ENCODE measurements at regions of chr14 and their contacts with region 1.

Region 1: DNA sequence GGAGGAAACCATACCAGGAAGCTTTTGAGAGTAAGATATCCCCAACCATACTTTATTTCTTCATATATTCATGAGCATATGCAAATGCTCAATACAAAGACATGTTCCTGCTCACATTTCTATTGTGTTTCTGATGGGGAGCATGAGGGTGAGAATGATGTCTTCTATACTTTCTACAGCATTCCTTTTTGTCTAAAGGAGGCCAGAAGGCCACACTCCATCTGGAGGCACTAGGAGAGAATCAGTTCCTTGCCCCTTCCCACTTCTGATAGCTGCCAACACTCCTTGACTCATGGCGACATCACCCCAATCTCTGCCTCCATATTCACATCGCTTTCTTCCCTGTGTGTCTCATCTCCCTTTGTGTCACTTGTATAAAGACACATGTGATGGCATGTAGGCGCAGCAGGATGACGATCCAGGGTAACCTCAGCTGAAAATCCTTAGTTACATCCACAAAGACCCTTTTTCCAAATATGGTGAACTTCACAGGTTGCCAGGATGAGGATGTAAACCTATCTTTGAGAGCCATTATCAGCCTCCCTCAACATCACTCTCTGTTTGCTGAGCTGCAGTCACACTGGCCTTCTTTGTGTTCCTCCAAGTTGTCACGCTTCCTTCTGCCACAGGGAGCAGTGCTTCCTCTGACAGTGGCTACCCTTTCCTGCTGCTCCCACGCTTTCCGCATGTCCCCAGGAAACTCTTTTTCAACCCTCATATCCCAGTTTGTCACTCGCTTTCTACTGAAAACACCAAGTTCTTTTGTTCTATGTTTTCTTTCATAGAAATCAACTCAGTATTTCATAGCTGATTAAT is 96.9 kb downstream of the STXBP6 start:
- DNase-seq: no peak
- ATAC-seq: peak; percentile 32
- H3K4me3 ChIP-seq: no peak overlapping the region
- H3K27ac ChIP-seq: no peak overlapping the region
- H3K4me1 ChIP-seq: peaks cover 6% of the 10 kb centered on the region
- H3K27me3 ChIP-seq: no peaks in the 10 kb centered on the region
- CTCF ChIP-seq: peak in 2 of 3 experiments; percentile 10 to 30; a peak in 2 of 6 replicates
- EP300 ChIP-seq: no peak
- POLR2A ChIP-seq: no peak
- RAD21 ChIP-seq: no peak

Region 2: GRCh38 chr14:24429395-24430142 is 523.5 kb before region 1 on chr14 and contains the starts of genes CBLN3 and KHNYN:
- CTCF ChIA-PET with region 1: no interaction called
- POLR2A ChIA-PET with region 1: no interaction called
- RAD21 ChIA-PET with region 1: no interaction called
- SMC1A ChIA-PET with region 1: no interaction called
- in situ Hi-C with region 1: no loop called
- intact Hi-C with region 1: no loop called
- DNase-seq: no peak
- ATAC-seq: peak; percentile 79
- H3K4me3 ChIP-seq: peak within 1 kb of the TSS; percentile 93
- H3K27ac ChIP-seq: peak within 1 kb of the TSS; percentile 92
- H3K4me1 ChIP-seq: peaks cover 8% of the 10 kb centered on the region
- H3K27me3 ChIP-seq: no peaks in the 10 kb centered on the region
- CTCF ChIP-seq: no peak
- EP300 ChIP-seq: no peak
- POLR2A ChIP-seq: peak; percentile 97
- RAD21 ChIP-seq: no peak
- polyA plus RNA-seq, gene CBLN3: 0.16 to 0.35 TPM
- polyA plus RNA-seq, gene KHNYN: 1.4 to 3.6 TPM

Region 3: GRCh38 chr14:24861083-24861630 is 91.9 kb before region 1 on chr14:
- CTCF ChIA-PET with region 1: interaction called, 3 read pairs
- POLR2A ChIA-PET with region 1: no interaction called
- RAD21 ChIA-PET with region 1: interaction called, 5 read pairs
- SMC1A ChIA-PET with region 1: interaction called, 15 read pairs
- in situ Hi-C with region 1: no loop called
- intact Hi-C with region 1: no loop called
- DNase-seq: no peak
- ATAC-seq: peak; percentile 77
- H3K4me3 ChIP-seq: no peak overlapping the region
- H3K27ac ChIP-seq: no peak overlapping the region
- H3K4me1 ChIP-seq: no peaks in the 10 kb centered on the region
- H3K27me3 ChIP-seq: no peaks in the 10 kb centered on the region
- CTCF ChIP-seq: no peak
- EP300 ChIP-seq: no peak
- POLR2A ChIP-seq: no peak
- RAD21 ChIP-seq: no peak

Region 4: GRCh38 chr14:24921903-24922302 is 31.2 kb before region 1 on chr14:
- CTCF ChIA-PET with region 1: interaction called, 10 read pairs
- POLR2A ChIA-PET with region 1: interaction called, 10 read pairs
- RAD21 ChIA-PET with region 1: interaction called, 31 read pairs
- SMC1A ChIA-PET with region 1: interaction called, 23 read pairs
- in situ Hi-C with region 1: no loop called
- intact Hi-C with region 1: no loop called
- DNase-seq: no peak
- ATAC-seq: peak; percentile 14; the same call in 1 of the 3 replicates
- H3K4me3 ChIP-seq: no peak overlapping the region
- H3K27ac ChIP-seq: no peak overlapping the region
- H3K4me1 ChIP-seq: no peaks in the 10 kb centered on the region
- H3K27me3 ChIP-seq: no peaks in the 10 kb centered on the region
- CTCF ChIP-seq: no peak
- EP300 ChIP-seq: no peak
- POLR2A ChIP-seq: no peak
- RAD21 ChIP-seq: no peak

Region 5: GRCh38 chr14:24965934-24966578 is 13.0 kb after region 1 on chr14:
- CTCF ChIA-PET with region 1: interaction called, 14 read pairs
- POLR2A ChIA-PET with region 1: interaction called, 15 read pairs
- RAD21 ChIA-PET with region 1: interaction called, 37 read pairs
- SMC1A ChIA-PET with region 1: interaction called, 390 read pairs
- in situ Hi-C with region 1: no loop called
- intact Hi-C with region 1: no loop called
- DNase-seq: no peak
- ATAC-seq: peak; percentile 69
- H3K4me3 ChIP-seq: no peak overlapping the region
- H3K27ac ChIP-seq: no peak overlapping the region
- H3K4me1 ChIP-seq: no peaks in the 10 kb centered on the region
- H3K27me3 ChIP-seq: no peaks in the 10 kb centered on the region
- CTCF ChIP-seq: no peak
- EP300 ChIP-seq: 0 out of 4 replicates have a peak, but pooled peaks of 1 of the 2 experiments have one; percentile 9
- POLR2A ChIP-seq: no peak
- RAD21 ChIP-seq: no peak

Region 6: DNA sequence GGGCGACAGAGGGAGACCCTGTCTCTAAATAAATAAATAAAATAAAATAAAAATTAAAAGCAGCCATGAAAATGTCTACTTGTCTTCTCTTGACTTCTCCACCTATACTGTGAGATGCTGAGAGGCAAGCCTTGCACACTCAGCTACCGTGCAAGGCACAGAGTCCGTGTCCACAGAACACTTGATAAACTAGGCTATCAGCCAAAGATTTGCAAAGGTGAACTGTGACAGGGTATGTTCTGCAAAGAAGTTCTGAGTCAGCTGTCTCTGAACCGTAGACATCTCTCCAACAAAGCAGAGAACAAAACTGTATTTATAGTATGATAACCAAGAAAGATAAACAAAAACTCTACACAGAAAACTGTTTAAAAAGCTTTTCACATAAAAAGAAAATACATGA is 61.4 kb after region 1 on chr14:
- CTCF ChIA-PET with region 1: interaction called, 3 read pairs
- POLR2A ChIA-PET with region 1: no interaction called
- RAD21 ChIA-PET with region 1: interaction called, 4 read pairs
- SMC1A ChIA-PET with region 1: interaction called, 12 read pairs
- in situ Hi-C with region 1: no loop called
- intact Hi-C with region 1: no loop called
- DNase-seq: no peak
- ATAC-seq: peak; percentile 37
- H3K4me3 ChIP-seq: no peak overlapping the region
- H3K27ac ChIP-seq: no peak overlapping the region
- H3K4me1 ChIP-seq: no peaks in the 10 kb centered on the region
- H3K27me3 ChIP-seq: no peaks in the 10 kb centered on the region
- CTCF ChIP-seq: no peak
- EP300 ChIP-seq: no peak
- POLR2A ChIP-seq: no peak
- RAD21 ChIP-seq: no peak

Measured in GM12878 (cell line).